H1 (cell line): ENCODE measurements at regions of chr19 and their contacts with region 1.

Region 1: DNA sequence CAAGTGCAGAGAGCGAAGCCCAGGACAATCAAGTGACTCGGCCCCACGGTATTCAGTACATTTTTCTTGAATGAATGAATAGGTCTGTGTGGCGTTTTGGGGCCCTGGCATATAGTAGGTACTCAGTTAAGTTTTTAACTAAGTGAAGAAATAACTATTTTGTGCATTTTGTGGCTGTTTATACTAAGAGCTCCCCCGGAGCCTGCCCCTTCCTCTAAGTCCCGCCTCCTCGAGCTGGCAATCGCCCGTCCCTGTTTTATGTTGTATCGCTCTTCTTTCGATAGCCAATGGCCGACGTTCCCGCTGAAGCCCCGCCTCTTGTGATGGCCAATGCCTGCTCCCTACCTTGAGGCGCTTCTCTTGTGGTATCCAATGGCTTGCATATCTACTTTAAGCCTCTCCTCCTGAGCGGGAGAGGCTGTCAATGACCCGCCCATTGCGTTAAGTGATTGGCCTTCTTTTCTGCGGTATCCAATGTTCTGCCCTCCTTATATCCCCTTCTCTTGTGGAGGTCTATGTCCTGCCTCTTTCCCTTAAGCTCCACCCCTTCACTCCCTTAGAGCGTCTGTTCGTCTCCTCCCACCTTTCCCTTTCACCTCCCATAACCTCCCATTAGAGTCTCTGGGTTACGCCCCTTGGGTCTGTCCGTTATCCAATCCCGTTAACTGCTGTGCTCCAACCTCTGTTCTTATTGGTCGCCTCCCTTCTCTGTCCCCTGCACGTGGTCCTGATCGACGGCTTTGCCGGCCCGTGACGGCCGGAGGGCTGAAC is 509 bp upstream of the HDGFL2 start:
- DNase-seq: peak; percentile 92 to 99
- H3K4me3 ChIP-seq: peak overlapping the region; percentile 37 to 99 (median 60)
- H3K27ac ChIP-seq: peak overlapping the region; percentile 35; the same call in 1 of the 2 replicates
- H3K4me1 ChIP-seq: peaks cover 0 to 16% (median 11%) of the 10 kb centered on the region in 4 experiments; a peak in 5 of 7 replicates
- H3K27me3 ChIP-seq: no peaks in the 10 kb centered on the region; a peak in 1 of 7 replicates
- CTCF ChIP-seq: no peak
- EP300 ChIP-seq: no peak
- POLR2A ChIP-seq: no peak; a peak in 1 of 3 replicates
- RAD21 ChIP-seq: no peak

Region 2: GRCh38 chr19:4457654-4458395 is 13.8 kb before region 1 on chr19 and contains the start of gene UBXN6:
- CTCF ChIA-PET with region 1: interaction called, 5 read pairs
- POLR2A ChIA-PET with region 1: interaction called, 12 read pairs
- DNase-seq: peak; percentile 94 to 96
- H3K4me3 ChIP-seq: peak within 1 kb of the TSS; percentile 63 to 75 (median 70)
- H3K27ac ChIP-seq: peak within 1 kb of the TSS; percentile 75; the same call in 1 of the 2 replicates
- H3K4me1 ChIP-seq: peaks cover 0 to 5% (median 2%) of the 10 kb centered on the region in 4 experiments; a peak in 4 of 7 replicates
- H3K27me3 ChIP-seq: no peaks in the 10 kb centered on the region
- CTCF ChIP-seq: no peak
- EP300 ChIP-seq: no peak
- POLR2A ChIP-seq: no peak; a peak in 1 of 3 replicates
- RAD21 ChIP-seq: no peak
- total RNA-seq, gene UBXN6: 28.0 and 29.9 TPM in 2 replicates